ENCODE measurements at regions of chr7 and their contacts with region 1.

Region 1: DNA sequence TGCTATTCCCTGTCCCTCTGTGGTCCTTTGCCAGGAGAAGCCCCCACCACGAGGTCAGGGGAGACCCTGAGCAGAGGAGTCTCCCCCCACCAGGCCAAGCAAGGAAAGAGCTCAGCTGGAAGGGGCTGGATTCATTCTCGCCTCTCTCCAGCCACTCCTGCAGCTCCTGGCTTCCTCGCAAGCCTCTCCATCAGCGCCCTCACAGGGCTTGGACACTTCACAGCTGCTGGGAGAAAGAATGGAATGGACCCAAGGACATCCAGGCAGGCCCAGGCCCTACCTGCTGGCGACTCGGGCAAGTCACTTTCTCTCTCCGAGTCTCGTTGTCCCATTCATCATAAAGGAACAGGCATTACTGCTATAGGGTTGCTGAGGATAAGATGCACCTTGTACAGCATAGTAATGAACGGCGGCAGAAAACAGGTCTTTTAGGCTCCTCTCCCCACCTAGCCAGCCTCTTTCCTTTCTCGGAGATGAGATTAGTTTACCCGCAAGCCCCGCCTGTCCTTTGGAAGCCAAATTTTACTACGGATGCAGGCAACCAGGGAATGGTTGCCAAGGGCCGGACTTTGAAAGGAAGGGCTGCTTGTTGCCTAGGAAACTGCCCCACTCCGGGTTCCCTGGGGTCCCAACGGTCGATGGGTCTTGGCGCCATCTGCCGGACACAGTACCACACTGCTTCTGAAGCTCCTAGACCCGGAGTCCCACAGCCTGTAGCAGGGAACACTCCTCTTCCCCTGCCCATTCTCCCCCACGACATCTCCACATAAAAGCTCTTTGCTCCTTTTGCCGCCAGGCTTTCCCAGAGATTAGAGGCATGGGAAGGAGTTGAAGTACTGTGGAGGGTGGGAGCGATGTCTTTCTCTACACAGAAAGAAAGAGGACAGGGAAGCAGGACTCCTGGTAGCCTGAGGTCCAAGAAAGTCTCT is 22.3 kb downstream of the IMPDH1 start:
- DNase-seq: peak; percentile 89
- H3K4me3 ChIP-seq: no peak overlapping the region
- H3K27ac ChIP-seq: no peak overlapping the region
- H3K4me1 ChIP-seq: peaks cover 0 to 13% (median 8%) of the 10 kb centered on the region in 6 donors
- H3K27me3 ChIP-seq: peaks cover 0 to 24% (median 0%) of the 10 kb centered on the region in 7 donors
- CTCF ChIP-seq: peak; percentile 51 to 93 (median 82)
- POLR2A ChIP-seq: no peak

Region 2: DNA sequence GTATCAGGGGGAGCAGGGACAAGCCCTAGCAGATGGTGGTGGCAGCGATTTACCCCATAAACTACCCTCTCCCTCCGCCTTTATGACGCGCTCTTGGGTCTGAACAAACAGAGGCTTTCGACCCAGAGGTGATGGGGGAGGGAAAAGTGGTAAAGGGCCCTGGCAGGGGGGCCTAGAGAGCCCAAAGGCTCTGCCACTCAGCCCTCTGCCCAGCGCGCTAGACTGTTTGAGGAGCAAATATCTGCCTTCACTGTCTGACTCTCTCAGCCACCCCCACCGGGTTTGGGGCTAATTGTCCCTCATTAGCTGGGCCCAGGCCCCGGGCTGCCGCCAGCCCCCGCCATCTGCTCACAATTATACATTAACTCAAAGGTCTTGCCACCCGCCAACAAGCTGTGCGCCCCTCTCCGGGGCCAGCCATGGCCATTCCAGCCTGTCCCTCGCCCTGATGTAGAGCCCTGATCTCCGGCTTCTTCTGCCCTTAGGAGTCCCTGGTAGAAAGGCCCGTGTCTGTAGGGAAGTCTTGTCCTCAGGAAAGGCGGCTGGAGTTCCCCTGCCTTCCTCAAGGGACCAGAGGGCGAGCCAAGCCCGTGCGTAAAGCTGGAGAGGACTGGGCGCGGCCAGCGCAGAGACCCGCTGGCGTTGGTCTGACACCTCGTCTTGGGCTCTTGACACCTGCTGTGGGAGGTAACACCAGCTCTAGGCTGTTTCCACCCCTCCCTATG is 767.6 kb before region 1 on chr7:
- intact Hi-C with region 1: no loop called
- DNase-seq: no peak
- H3K4me3 ChIP-seq: no peak overlapping the region
- H3K27ac ChIP-seq: no peak overlapping the region
- H3K4me1 ChIP-seq: peaks cover 0 to 16% (median 7%) of the 10 kb centered on the region in 6 donors
- H3K27me3 ChIP-seq: peaks cover 0 to 82% (median 24%) of the 10 kb centered on the region in 7 donors
- CTCF ChIP-seq: no peak
- POLR2A ChIP-seq: no peak

Region 3: GRCh38 chr7:128209229-128210035 is 178.0 kb before region 1 on chr7:
- intact Hi-C with region 1: no loop called
- DNase-seq: peak; percentile 92
- H3K4me3 ChIP-seq: peak overlapping the region in 1 of 8 donors; percentile 17
- H3K27ac ChIP-seq: no peak overlapping the region
- H3K4me1 ChIP-seq: peaks cover 0 to 21% (median 13%) of the 10 kb centered on the region in 6 donors
- H3K27me3 ChIP-seq: peaks cover 0 to 54% (median 0%) of the 10 kb centered on the region in 7 donors
- CTCF ChIP-seq: peak; percentile 94 to 99 (median 98)
- POLR2A ChIP-seq: no peak

Region 4: DNA sequence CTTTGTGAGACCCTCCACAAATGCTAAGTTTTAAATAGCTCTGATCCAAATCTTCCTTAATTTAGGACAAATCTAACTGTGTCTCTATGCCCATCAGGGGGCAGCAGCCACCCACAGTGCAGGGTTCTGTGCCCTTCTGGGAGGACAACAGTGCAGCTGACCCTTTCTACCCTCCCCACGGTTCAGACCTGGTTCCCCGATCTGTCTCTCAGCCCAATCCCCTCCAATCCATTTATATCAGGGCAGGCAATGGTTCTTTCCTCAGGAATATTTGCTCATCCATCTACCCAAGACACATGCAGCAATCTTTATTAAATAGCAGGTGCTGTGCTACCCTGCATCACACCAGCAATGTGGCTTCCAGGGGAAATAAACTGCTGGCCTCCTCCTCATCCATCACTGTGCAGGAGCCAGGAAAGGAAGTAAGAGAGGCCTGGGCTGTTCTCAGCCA is 39.8 kb before region 1 on chr7:
- intact Hi-C with region 1: loop called (anchors 5 kb)
- DNase-seq: no peak
- H3K4me3 ChIP-seq: no peak overlapping the region
- H3K27ac ChIP-seq: no peak overlapping the region
- H3K4me1 ChIP-seq: peaks cover 3 to 35% (median 23%) of the 10 kb centered on the region in 6 donors
- H3K27me3 ChIP-seq: peaks cover 4 to 47% (median 26%) of the 10 kb centered on the region in 7 donors
- CTCF ChIP-seq: peak in 10 of 11 experiments; percentile 12 to 63 (median 52)
- POLR2A ChIP-seq: no peak